ENCODE measurements at regions of chr18 and their contacts with region 1.

Region 1: DNA sequence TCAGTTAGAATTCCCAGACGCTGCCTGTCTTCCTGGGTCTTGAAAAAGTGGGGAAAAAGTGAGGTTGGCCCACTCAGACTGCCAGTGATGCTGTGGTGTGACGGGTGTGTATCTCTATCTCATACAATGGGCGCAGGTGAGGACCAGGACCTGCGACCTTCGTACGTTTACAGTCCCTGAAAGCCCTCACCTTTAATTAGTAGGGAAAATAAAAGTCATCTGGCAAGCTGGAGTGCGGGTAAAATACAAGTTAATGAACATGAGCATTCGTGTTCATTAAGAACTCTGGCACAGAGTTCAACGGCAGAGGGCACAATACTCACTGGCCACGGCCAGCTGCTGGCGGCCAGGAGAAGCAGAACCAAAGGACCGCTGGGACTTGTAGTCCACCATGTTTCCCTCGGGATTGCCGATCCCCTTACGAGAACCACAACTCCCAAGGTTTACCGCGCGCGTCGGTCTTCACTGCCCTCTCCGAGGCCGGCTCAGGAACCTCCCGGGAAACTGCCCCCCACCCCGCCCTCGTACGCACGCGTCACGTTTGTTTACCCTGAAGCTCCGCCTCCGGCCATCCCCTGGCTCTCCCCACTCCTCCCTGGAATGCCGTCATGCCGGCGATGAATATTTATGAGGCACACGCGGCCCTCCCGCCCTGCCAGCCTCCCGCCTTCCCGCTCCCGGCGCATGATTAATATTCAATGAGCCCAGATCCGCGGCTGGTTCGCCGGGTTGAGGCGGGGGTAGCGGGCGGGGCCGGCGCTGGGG is 488 bp upstream of the PHLPP1 start:
- DNase-seq: peak; percentile 100
- H3K4me3 ChIP-seq: peak overlapping the region; percentile 76
- H3K27ac ChIP-seq: peak overlapping the region; percentile 83
- H3K4me1 ChIP-seq: peaks cover 29% of the 10 kb centered on the region
- H3K27me3 ChIP-seq: no peaks in the 10 kb centered on the region
- CTCF ChIP-seq: peak; percentile 79

Region 2: GRCh38 chr18:60873708-60874107 is 1841.1 kb before region 1 on chr18:
- CTCF ChIA-PET with region 1: no interaction called
- POLR2A ChIA-PET with region 1: interaction called, 12 read pairs
- intact Hi-C with region 1: no loop called
- DNase-seq: no peak
- H3K4me3 ChIP-seq: no peak overlapping the region
- H3K27ac ChIP-seq: no peak overlapping the region
- H3K4me1 ChIP-seq: no peaks in the 10 kb centered on the region
- H3K27me3 ChIP-seq: peaks cover 15% of the 10 kb centered on the region
- CTCF ChIP-seq: no peak

Region 3: GRCh38 chr18:62186774-62187542 is 527.9 kb before region 1 on chr18 and contains the starts of genes PIGN and RELCH:
- CTCF ChIA-PET with region 1: no interaction called
- POLR2A ChIA-PET with region 1: no interaction called
- intact Hi-C with region 1: loop called (anchors 5 kb)
- DNase-seq: peak; percentile 99
- H3K4me3 ChIP-seq: peak within 1 kb of the TSS; percentile 98
- H3K27ac ChIP-seq: peak within 1 kb of the TSS; percentile 74
- H3K4me1 ChIP-seq: peaks cover 18% of the 10 kb centered on the region
- H3K27me3 ChIP-seq: no peaks in the 10 kb centered on the region
- CTCF ChIP-seq: no peak
- total RNA-seq, gene PIGN: 21.3 and 23.8 TPM in 2 replicates
- total RNA-seq, gene RELCH: 29.2 and 31.6 TPM in 2 replicates

Region 4: GRCh38 chr18:62663731-62664336 is 51.0 kb before region 1 on chr18:
- CTCF ChIA-PET with region 1: no interaction called
- POLR2A ChIA-PET with region 1: no interaction called
- intact Hi-C with region 1: no loop called
- DNase-seq: no peak
- H3K4me3 ChIP-seq: no peak overlapping the region
- H3K27ac ChIP-seq: no peak overlapping the region
- H3K4me1 ChIP-seq: no peaks in the 10 kb centered on the region
- H3K27me3 ChIP-seq: no peaks in the 10 kb centered on the region
- CTCF ChIP-seq: no peak

Region 5: DNA sequence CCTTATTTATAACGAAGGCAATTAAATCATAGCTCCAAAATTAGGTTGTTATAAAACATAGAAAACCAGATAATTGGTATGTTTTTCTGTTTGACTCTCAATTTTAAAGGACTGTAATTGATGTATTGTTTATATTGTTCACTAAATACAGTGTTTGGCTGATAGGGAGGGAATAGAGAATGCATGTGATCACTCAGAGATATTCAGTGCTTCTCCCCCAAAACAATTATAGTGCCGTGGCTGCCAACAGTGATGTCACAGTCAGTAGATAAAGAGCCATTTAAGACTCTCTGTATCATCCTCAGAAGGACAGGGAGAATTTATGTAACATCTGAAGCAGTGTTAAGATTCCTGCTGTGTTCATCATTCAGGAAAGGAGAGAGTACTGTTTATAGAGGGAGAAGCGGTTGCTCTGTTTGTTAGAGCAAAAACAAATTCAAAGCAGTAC is 70.1 kb after region 1 on chr18:
- CTCF ChIA-PET with region 1: no interaction called
- POLR2A ChIA-PET with region 1: no interaction called
- intact Hi-C with region 1: loop called (anchors 5 kb)
- DNase-seq: peak; percentile 85
- H3K4me3 ChIP-seq: no peak overlapping the region
- H3K27ac ChIP-seq: no peak overlapping the region
- H3K4me1 ChIP-seq: peaks cover 32% of the 10 kb centered on the region
- H3K27me3 ChIP-seq: no peaks in the 10 kb centered on the region
- CTCF ChIP-seq: no peak

Region 6: DNA sequence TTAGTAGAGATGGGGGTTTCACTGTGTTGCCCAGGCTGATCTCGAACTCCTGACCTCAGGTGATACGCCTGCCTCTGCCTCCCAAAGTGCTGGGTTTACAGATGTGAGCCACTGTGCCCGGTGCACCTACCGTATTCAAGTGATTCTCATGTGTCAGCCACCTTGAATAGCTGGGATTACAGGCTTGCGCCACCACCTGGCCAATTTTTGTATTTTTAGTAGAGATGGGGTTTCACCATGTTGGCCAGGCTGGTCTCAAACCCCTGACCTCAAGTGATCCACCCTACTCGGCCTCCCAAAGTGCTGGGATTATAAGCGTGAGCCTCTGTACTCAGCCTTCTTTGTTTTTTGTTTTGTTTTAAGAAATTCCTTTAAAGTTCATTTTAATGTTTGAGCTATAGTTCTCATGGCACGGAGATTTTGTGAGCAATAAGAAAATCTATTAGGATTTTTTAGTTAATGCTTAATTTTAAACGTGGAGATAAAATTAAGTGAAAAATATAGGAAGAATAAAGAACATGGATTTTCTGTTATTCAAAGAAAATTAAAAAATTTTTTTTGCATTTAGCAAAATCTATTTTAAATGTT is 243.1 kb after region 1 on chr18:
- CTCF ChIA-PET with region 1: interaction called, 5 read pairs
- POLR2A ChIA-PET with region 1: interaction called, 3 read pairs
- intact Hi-C with region 1: loop called (anchors 2 kb)
- DNase-seq: peak; percentile 54
- H3K4me3 ChIP-seq: no peak overlapping the region
- H3K27ac ChIP-seq: no peak overlapping the region
- H3K4me1 ChIP-seq: no peaks in the 10 kb centered on the region
- H3K27me3 ChIP-seq: no peaks in the 10 kb centered on the region
- CTCF ChIP-seq: peak; percentile 58

Region 7: DNA sequence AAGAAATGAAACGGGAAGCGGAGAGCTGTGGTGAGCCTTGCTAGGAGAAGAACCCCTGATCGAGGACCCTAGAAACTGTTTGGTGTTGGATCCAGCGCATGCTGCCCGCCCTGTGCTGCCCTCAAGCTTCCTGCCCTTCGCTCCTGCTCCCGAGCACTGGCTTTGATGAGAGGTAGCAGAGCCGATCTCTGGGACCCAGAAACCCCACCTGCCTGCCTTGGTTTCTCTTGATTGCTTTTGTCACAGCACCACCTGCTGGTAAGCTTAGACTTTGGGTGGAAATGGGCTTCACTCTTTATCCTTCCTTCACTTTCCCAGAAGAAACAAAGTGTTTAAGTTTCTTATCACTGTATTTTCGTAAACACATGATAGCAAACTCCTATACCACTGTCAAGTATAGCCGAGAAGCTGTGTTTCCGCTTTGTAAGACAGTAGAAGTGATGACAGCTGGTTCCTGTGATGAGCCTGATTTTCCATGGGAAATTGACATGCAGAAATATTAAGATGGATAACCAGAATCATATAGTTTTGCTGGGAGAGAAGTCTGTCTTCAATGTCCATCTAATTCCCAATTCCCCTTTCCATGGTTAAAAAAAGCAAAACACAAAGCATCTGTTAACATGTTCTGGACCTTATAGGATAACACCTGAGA is 267.9 kb after region 1 on chr18:
- CTCF ChIA-PET with region 1: interaction called, 3 read pairs
- POLR2A ChIA-PET with region 1: no interaction called
- intact Hi-C with region 1: loop called (anchors 1 kb)
- DNase-seq: peak; percentile 62
- H3K4me3 ChIP-seq: no peak overlapping the region
- H3K27ac ChIP-seq: no peak overlapping the region
- H3K4me1 ChIP-seq: no peaks in the 10 kb centered on the region
- H3K27me3 ChIP-seq: no peaks in the 10 kb centered on the region
- CTCF ChIP-seq: peak; percentile 85

Region 8: GRCh38 chr18:62998443-62998842 is 283.6 kb after region 1 on chr18:
- CTCF ChIA-PET with region 1: no interaction called
- POLR2A ChIA-PET with region 1: no interaction called
- intact Hi-C with region 1: no loop called
- DNase-seq: no peak
- H3K4me3 ChIP-seq: no peak overlapping the region
- H3K27ac ChIP-seq: no peak overlapping the region
- H3K4me1 ChIP-seq: no peaks in the 10 kb centered on the region
- H3K27me3 ChIP-seq: no peaks in the 10 kb centered on the region
- CTCF ChIP-seq: no peak